Ovary (tissue), 10 donors: ENCODE measurements at regions of chr15 and their contacts with region 1.

Region 1: DNA sequence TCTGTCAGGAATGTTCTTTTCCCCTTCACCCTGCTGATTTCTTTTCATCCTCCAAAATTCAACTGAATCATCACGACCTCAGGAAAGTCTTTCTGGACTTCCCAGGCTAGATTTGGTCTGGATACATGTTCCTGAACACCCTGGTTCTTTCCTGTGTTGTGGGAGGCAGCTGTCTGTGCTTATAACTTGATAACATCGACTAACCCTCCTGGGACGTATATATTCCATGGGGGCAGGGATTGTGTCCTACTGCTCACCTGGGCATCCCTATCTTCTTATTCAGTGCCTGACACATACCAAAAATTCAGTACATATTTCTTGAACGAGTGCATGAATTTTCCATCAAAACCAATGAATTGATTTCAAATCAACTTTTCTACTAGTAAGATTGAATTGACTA is 47.6 kb upstream of the MEF2A start:
- DNase-seq: no peak
- H3K4me3 ChIP-seq: no peak overlapping the region
- H3K27ac ChIP-seq: no peak overlapping the region
- H3K4me1 ChIP-seq: no peaks in the 10 kb centered on the region
- H3K27me3 ChIP-seq: no peaks in the 10 kb centered on the region
- CTCF ChIP-seq: no peak
- EP300 ChIP-seq: no peak
- POLR2A ChIP-seq: no peak

Region 2: DNA sequence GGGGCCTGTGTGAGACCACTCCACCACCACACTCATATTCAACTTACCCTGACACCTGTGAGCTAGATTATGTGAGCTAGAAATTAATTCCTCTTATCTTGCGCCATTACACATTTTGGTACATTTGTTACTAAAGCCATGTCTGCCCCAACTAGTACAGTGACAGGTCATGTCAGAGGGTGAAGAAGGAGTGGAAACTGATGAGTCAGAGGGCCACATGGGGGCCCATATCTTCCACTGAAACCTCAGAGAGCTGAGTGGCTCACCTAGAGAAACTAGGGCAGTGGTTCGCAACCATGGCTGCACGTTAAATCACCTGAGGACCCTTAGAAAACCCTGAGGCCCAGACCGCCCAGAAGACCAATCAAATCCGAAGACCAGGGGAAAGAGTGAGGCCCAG is 31.9 kb after region 1 on chr15:
- intact Hi-C with region 1: loop called in 1 of 4 experiments (anchors 5 kb)
- DNase-seq: no peak
- H3K4me3 ChIP-seq: no peak overlapping the region
- H3K27ac ChIP-seq: no peak overlapping the region
- H3K4me1 ChIP-seq: no peaks in the 10 kb centered on the region
- H3K27me3 ChIP-seq: no peaks in the 10 kb centered on the region
- CTCF ChIP-seq: no peak
- EP300 ChIP-seq: no peak
- POLR2A ChIP-seq: no peak

Region 3: DNA sequence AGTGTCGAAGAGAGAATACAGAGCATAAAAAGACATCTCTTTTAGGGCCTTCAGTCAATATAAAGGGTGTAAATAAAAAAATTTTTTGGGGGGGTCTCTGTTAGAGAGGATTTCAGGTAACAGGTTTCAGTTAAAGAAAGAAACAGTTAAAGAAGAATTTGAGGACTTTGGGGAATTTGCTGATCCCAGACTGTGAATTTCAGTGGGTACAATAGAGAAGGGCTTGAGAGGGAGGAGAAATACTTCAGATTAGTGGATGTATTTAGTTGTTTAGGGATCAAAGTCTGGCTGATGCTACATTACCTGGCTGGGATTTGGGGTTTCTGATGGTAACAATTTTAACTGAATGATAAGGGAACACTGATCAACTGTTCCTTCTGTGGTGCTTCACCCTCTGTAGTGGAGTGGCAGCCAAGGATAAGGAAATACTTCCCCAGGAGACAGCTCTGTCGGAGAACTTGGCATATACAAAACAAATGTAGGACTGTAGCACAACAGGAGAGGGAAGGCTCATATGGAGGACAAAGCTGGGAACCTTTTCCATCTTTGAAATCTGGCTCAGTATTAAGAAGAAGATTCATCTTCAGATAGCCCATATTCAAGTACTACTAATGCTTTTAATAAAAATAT is 126.8 kb after region 1 on chr15:
- intact Hi-C with region 1: no loop called
- DNase-seq: no peak
- H3K4me3 ChIP-seq: no peak overlapping the region
- H3K27ac ChIP-seq: no peak overlapping the region
- H3K4me1 ChIP-seq: no peaks in the 10 kb centered on the region
- H3K27me3 ChIP-seq: no peaks in the 10 kb centered on the region
- CTCF ChIP-seq: no peak
- EP300 ChIP-seq: no peak
- POLR2A ChIP-seq: no peak

Region 4: DNA sequence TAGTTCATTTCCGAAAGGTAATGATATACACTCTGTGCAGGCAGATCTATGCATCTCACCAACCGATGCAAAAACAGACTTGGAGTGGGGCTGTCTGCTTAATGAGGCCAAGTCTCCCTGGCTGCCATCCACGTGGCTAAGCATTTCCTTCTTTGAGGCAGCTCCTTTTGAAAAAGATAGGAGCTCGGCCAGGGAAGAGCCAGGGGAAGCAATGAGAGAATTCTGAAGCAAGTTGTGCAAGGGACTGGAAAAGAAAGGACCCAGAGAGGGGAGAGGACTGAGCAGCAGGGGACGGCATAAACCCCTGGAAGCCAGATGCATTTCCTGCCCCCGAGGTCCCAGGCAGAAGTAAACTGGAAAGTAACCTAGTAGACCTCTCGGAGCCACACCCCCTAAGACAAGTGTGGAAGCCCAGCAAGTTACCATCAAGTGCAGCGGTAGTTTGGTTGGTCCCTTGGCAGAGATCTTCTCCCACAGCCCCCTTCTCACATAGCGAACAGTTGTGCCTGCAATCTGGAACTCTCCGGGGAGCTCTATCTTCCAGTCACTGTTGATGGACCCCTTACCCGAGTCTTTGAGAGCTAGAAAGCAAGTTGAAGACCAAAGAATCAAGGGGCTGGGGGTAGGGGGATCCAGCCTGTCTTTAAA is 535.4 kb after region 1 on chr15:
- intact Hi-C with region 1: no loop called
- DNase-seq: peak in 1 of 5 donors; percentile 49
- H3K4me3 ChIP-seq: no peak overlapping the region
- H3K27ac ChIP-seq: no peak overlapping the region
- H3K4me1 ChIP-seq: no peaks in the 10 kb centered on the region
- H3K27me3 ChIP-seq: no peaks in the 10 kb centered on the region
- CTCF ChIP-seq: no peak
- EP300 ChIP-seq: no peak
- POLR2A ChIP-seq: no peak